H1 (cell line): ENCODE measurements at regions of chr6 and their contacts with region 1.

Region 1: GRCh38 chr6:84779380-84779779 is 15.0 kb upstream of the TBX18 start:
- DNase-seq: no peak
- H3K4me3 ChIP-seq: no peak overlapping the region
- H3K27ac ChIP-seq: no peak overlapping the region
- H3K4me1 ChIP-seq: peaks cover 0 to 2% (median 0%) of the 10 kb centered on the region in 4 experiments; a peak in 2 of 7 replicates
- H3K27me3 ChIP-seq: peaks cover 10 to 29% (median 20%) of the 10 kb centered on the region in 4 experiments
- CTCF ChIP-seq: peak in 2 of 3 experiments; percentile 15 to 42; a peak in 3 of 4 replicates
- EP300 ChIP-seq: no peak
- POLR2A ChIP-seq: no peak
- RAD21 ChIP-seq: peak; percentile 29 to 48

Region 2: DNA sequence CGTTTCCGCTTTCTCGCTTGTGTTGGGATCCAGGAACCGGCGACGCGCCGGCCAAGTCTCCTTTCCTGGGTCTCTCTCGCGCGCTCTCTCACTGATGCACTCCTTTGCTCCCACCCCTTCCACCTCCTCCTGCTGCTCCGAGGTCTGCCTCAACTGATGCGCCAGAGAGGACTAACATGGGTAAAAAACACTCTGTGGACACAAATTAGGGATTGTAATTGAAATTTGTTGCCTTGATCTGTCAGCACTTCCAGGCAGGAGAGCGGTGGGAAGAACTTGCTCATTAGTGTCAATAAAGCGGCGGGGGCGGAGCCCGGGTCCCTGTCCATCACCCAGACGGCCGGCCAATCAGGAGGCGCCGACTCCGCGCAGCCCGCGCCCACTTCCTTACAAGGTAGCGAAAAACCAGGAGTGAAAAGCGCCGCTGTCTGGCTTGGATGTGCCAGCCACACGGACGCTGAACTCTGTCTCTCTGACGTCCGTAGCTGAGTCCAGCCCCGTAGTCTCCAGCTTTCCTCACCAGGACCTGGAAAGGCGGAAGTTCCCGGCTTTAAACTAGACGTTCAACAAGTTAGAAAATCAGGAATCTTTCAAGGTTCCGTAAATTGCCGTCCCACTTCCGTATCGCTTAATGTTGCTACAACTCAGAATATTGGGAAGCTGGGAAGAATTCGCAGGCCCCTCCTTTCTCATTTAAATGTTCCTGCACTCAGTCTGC is 14.9 kb before region 1 on chr6 and contains the start of gene TBX18:
- CTCF ChIA-PET with region 1: interaction called, 29 read pairs
- POLR2A ChIA-PET with region 1: interaction called, 9 read pairs
- DNase-seq: peak; percentile 83 to 96
- H3K4me3 ChIP-seq: peak within 1 kb of the TSS; percentile 49 to 74 (median 64)
- H3K27ac ChIP-seq: no peak within 1 kb of the TSS
- H3K4me1 ChIP-seq: peaks cover 0 to 24% (median 13%) of the 10 kb centered on the region in 4 experiments; a peak in 5 of 7 replicates
- H3K27me3 ChIP-seq: peaks cover 60 to 92% (median 81%) of the 10 kb centered on the region in 4 experiments
- CTCF ChIP-seq: no peak
- EP300 ChIP-seq: no peak
- POLR2A ChIP-seq: no peak
- RAD21 ChIP-seq: peak in 1 of 2 experiments; percentile 14; a peak in 2 of 4 replicates
- total RNA-seq, gene TBX18: not detected in 2 replicates

Region 3: GRCh38 chr6:84866715-84867114 is 87.3 kb after region 1 on chr6:
- CTCF ChIA-PET with region 1: no interaction called
- POLR2A ChIA-PET with region 1: no interaction called
- DNase-seq: no peak
- H3K4me3 ChIP-seq: no peak overlapping the region
- H3K27ac ChIP-seq: no peak overlapping the region
- H3K4me1 ChIP-seq: no peaks in the 10 kb centered on the region
- H3K27me3 ChIP-seq: no peaks in the 10 kb centered on the region
- CTCF ChIP-seq: no peak
- EP300 ChIP-seq: no peak
- POLR2A ChIP-seq: no peak
- RAD21 ChIP-seq: no peak

Region 4: DNA sequence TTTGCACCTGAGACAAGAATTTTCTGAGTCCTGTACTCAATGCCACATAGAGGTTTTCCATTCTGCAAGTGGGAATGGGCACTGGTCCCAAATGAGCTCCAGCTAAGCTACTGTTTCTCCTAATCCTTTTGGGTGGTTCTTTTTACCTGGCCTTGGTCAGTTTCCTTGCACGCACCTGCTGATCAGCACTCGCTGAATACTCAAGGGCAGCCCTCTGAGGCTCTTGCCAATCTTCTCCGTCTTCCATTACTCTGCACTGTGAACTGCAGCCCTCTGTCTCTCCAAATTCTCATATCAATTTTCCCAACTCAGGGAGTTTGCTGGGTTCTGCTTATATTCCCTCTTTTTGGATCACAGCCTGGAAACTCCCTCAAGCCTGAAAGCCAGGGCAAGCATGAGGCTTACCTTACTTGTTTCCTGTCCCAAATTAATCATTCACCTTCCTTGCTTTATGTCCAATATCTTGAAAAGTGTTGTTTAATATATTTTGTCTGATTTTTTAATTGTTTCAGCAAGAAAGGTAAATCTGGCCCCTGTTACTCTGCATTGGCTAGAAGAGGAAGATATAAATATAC is 123.1 kb after region 1 on chr6:
- CTCF ChIA-PET with region 1: no interaction called
- POLR2A ChIA-PET with region 1: no interaction called
- DNase-seq: no peak
- H3K4me3 ChIP-seq: no peak overlapping the region
- H3K27ac ChIP-seq: no peak overlapping the region
- H3K4me1 ChIP-seq: no peaks in the 10 kb centered on the region
- H3K27me3 ChIP-seq: no peaks in the 10 kb centered on the region
- CTCF ChIP-seq: no peak
- EP300 ChIP-seq: no peak
- POLR2A ChIP-seq: no peak
- RAD21 ChIP-seq: no peak

Region 5: DNA sequence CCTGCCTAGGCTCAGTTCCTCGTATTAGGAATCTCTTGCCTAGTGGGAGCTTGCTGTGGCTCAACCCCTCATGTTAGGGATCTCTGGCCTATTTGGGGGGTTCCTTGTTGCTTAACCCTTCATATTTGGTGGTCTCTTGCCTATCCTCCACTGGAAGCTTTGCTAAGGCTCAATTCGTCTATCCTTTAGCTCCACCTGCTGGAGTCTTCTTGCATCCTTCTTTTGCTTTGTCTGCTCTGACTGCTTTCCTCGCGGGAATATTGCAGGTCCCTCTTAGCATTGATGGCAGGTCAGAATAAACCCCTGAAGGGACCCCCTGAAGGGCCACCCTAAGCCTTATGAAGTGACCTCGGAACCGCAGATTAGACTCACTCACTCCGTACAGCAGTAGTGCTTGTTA is 188.0 kb after region 1 on chr6:
- CTCF ChIA-PET with region 1: interaction called, 14 read pairs
- POLR2A ChIA-PET with region 1: no interaction called
- DNase-seq: peak; percentile 13 to 62
- H3K4me3 ChIP-seq: no peak overlapping the region
- H3K27ac ChIP-seq: no peak overlapping the region
- H3K4me1 ChIP-seq: no peaks in the 10 kb centered on the region
- H3K27me3 ChIP-seq: no peaks in the 10 kb centered on the region
- CTCF ChIP-seq: peak; percentile 2 to 80 (median 74)
- EP300 ChIP-seq: no peak
- POLR2A ChIP-seq: no peak
- RAD21 ChIP-seq: peak; percentile 91 to 93